Dorsolateral prefrontal cortex (tissue), 120 donors: ENCODE measurements at regions of chr3 and their contacts with region 1.

Region 1: DNA sequence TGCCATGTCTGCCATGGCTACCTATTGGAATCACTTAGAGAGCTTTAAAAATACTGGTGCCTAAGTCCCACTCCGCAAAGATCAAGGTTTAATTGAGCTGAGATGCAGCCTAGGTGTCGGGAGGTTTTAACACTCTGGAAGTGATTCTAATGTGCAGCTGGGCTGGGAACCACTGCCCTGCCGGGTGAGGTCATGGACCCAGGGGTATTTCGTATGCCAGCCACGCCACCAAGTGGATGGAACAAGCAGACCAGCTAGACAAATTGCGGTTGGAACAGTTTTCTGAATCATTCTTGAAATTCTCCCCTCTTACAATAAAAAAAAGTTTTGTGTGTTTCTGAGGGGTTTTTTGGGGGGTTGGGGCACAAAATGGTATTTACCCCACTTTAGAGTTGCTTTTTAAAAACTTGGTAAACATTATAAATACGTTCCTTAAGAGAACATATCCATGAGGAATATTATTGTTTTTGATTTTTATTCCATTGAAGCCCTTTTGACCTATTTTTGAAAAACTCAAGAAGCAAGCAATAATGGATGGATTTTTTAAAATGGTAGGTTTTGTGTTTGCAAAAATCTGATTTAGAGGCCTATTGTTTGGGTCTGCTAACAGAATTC is 66.2 kb upstream of the CSTA start:
- DNase-seq: peak in 6 of 10 donors; percentile 24 to 64 (median 50)
- H3K4me3 ChIP-seq: no peak overlapping the region
- H3K27ac ChIP-seq: no peak overlapping the region
- H3K27me3 ChIP-seq: peaks cover 0 to 2% (median 0%) of the 10 kb centered on the region in 45 donors
- CTCF ChIP-seq: peak in 53 of 56 donors; percentile 26 to 76 (median 52)

Region 2: GRCh38 chr3:121552379-121552778 is 706.5 kb before region 1 on chr3:
- intact Hi-C with region 1: loop called (anchors 5 kb)
- DNase-seq: peak in 1 of 10 donors; percentile 33
- H3K4me3 ChIP-seq: peak overlapping the region in 14 of 59 donors; percentile 2 to 41 (median 25)
- H3K27ac ChIP-seq: peak overlapping the region in 1 of 59 donors; percentile 8
- H3K27me3 ChIP-seq: no peaks in the 10 kb centered on the region
- CTCF ChIP-seq: no peak

Region 3: DNA sequence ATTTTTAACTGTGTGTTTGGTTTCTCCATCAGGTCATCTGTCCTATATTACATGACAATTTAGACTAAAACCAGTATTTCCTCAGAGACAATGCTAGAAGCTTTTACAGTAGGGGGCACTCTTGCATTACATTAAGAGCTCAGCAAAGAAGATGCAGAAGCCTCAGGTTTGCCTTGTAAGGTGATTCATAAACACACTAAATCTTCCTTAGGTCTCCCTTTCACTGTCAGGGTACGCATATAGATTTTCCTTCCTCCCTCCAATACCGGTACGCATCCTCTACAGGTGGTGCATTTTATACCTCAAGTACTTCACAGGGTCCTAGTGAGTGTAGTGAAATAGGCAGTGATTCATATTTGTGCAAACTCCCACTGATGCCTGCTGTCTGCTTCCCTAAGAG is 157.2 kb before region 1 on chr3:
- intact Hi-C with region 1: loop called in 1 of 2 experiments (anchors 5 kb)
- DNase-seq: no peak
- H3K4me3 ChIP-seq: no peak overlapping the region
- H3K27ac ChIP-seq: no peak overlapping the region
- H3K27me3 ChIP-seq: peaks cover 0 to 7% (median 0%) of the 10 kb centered on the region in 45 donors
- CTCF ChIP-seq: peak in 51 of 56 donors; percentile 12 to 61 (median 37)

Region 4: DNA sequence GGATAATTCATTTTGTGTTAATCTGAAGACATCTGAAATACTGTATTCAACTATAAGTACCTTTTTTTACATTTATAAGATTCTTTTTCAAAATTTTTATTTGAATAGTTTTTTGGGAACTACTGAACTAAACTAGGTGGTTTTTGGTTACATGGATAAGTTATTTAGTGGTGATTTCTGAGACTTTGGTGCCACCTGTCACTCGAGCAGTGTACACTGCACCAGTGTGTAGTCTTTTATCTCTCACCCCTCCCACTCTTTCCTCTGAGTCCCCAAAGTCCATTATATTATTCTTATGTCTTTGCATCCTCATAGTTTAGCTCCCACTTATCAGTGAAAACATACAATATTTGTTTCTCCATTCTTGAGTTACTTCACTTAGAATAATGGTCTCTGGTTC is 146.1 kb before region 1 on chr3:
- intact Hi-C with region 1: no loop called
- DNase-seq: no peak
- H3K4me3 ChIP-seq: no peak overlapping the region
- H3K27ac ChIP-seq: no peak overlapping the region
- H3K27me3 ChIP-seq: peaks cover 0 to 9% (median 0%) of the 10 kb centered on the region in 45 donors
- CTCF ChIP-seq: no peak

Region 5: DNA sequence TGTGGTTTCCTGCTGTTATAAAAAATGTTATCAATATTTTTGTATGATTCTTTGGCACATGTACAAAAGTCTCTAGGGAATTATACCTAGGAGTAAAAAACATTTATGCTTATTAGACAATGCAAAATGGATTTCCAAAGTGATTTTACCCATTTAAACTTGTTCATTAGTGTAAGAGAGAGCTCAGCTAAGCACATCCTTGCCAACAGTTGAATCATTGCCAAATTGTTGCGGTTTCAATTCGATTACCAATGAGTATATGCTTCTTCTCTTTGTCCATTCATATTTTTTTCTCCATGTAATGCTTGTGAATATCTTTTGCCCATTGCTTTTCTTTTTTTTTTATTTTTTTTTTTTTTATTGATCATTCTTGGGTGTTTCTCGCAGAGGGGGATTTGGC is 58.2 kb before region 1 on chr3:
- intact Hi-C with region 1: no loop called
- DNase-seq: no peak
- H3K4me3 ChIP-seq: no peak overlapping the region
- H3K27ac ChIP-seq: no peak overlapping the region
- H3K27me3 ChIP-seq: no peaks in the 10 kb centered on the region
- CTCF ChIP-seq: no peak